ENCODE measurements at regions of chr7 and their contacts with region 1.

Region 1: GRCh38 chr7:100563809-100564400 is 9.8 kb downstream of the SAP25 start:
- DNase-seq: peak; percentile 92
- ATAC-seq: peak; percentile 76
- H3K4me3 Mint-ChIP-seq: no peak overlapping the region
- H3K27ac Mint-ChIP-seq: no peak overlapping the region
- H3K4me1 Mint-ChIP-seq: peaks cover 26% of the 10 kb centered on the region
- H3K27me3 Mint-ChIP-seq: no peaks in the 10 kb centered on the region
- CTCF ChIP-seq: peak; percentile 95

Region 2: GRCh38 chr7:100380196-100380595 is 183.7 kb before region 1 on chr7:
- CTCF ChIA-PET with region 1: no interaction called
- POLR2A ChIA-PET with region 1: no interaction called
- intact Hi-C with region 1: no loop called
- DNase-seq: no peak
- ATAC-seq: no peak
- H3K4me3 Mint-ChIP-seq: no peak overlapping the region
- H3K27ac Mint-ChIP-seq: no peak overlapping the region
- H3K4me1 Mint-ChIP-seq: peaks cover 9% of the 10 kb centered on the region
- H3K27me3 Mint-ChIP-seq: no peaks in the 10 kb centered on the region
- CTCF ChIP-seq: no peak

Region 3: DNA sequence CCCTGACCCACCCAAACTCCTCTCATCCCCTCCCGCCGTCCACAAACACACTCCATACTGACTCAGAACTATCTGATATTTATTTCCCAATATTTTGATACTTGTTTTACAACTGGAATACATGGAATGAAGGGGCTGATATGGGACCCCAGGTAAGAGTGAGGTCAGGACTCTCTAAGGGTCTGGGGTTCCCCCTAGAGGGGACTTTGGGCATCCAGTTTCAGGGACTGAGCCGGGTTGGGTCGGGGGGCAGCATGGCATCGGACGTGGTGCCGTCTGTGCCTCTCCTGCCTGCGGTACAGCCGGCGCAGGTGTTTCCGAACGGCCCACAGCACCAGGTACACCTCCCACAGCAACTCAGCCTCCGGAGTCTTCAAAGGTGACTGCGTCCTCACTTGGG is 107.3 kb before region 1 on chr7:
- CTCF ChIA-PET with region 1: interaction called, 13 read pairs
- POLR2A ChIA-PET with region 1: no interaction called
- intact Hi-C with region 1: no loop called
- DNase-seq: no peak
- ATAC-seq: no peak
- H3K4me3 Mint-ChIP-seq: no peak overlapping the region
- H3K27ac Mint-ChIP-seq: no peak overlapping the region
- H3K4me1 Mint-ChIP-seq: peaks cover 14% of the 10 kb centered on the region
- H3K27me3 Mint-ChIP-seq: no peaks in the 10 kb centered on the region
- CTCF ChIP-seq: no peak

Region 4: GRCh38 chr7:100478966-100479665 is 84.8 kb before region 1 on chr7 and contains the start of gene TSC22D4:
- CTCF ChIA-PET with region 1: interaction called, 36 read pairs
- POLR2A ChIA-PET with region 1: interaction called, 3 read pairs
- intact Hi-C with region 1: no loop called
- DNase-seq: peak; percentile 94
- ATAC-seq: peak; percentile 76
- H3K4me3 Mint-ChIP-seq: peak within 1 kb of the TSS; percentile 94
- H3K27ac Mint-ChIP-seq: peak within 1 kb of the TSS; percentile 95
- H3K4me1 Mint-ChIP-seq: peaks cover 40% of the 10 kb centered on the region
- H3K27me3 Mint-ChIP-seq: no peaks in the 10 kb centered on the region
- CTCF ChIP-seq: no peak
- total RNA-seq, gene TSC22D4: 92.6 to 94.2 TPM

Region 5: DNA sequence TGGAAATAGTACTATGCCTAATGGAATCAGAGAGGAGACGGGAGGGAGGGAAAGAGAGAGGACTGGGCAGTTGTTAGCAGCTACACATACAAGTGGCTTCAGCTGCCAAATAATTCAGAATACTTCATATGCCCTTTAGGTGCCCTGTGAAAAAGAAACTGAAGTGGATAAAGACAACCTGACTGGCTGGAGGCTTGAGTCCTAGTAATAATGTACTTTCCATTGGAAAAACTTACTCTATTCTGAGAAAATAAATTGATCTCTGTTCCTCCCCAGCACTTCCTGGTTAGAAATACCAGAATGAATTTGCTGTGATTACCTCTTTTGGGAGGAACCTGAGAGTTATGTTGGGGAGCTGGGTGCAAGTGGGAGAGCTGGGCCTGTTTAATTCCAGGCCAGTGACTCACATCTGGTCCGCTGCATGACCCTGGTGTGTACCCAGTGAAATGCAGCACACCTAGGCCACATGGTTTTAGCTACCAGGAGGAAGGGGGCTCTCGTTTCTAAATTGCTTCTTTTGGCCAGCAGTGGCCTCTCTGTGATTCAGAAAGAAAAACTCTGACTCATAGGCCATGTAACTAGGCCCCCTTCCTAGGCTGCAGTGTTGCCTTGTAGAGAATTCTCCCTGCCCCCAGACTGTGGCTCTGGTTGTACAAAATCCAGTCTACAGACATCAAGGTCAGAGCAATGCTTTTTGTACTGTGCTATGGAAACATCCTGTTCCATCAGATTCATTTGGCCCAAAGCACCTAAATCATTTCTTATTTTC is 18.4 kb before region 1 on chr7:
- CTCF ChIA-PET with region 1: interaction called, 92 read pairs
- POLR2A ChIA-PET with region 1: interaction called, 7 read pairs
- intact Hi-C with region 1: no loop called
- DNase-seq: peak; percentile 87
- ATAC-seq: peak; percentile 79
- H3K4me3 Mint-ChIP-seq: peak overlapping the region; percentile 91
- H3K27ac Mint-ChIP-seq: peak overlapping the region; percentile 99
- H3K4me1 Mint-ChIP-seq: peaks cover 90% of the 10 kb centered on the region
- H3K27me3 Mint-ChIP-seq: no peaks in the 10 kb centered on the region
- CTCF ChIP-seq: no peak

Region 6: GRCh38 chr7:100649826-100650547 is 86.1 kb after region 1 on chr7:
- CTCF ChIA-PET with region 1: no interaction called
- POLR2A ChIA-PET with region 1: no interaction called
- intact Hi-C with region 1: no loop called
- DNase-seq: no peak
- ATAC-seq: no peak
- H3K4me3 Mint-ChIP-seq: no peak overlapping the region
- H3K27ac Mint-ChIP-seq: no peak overlapping the region
- H3K4me1 Mint-ChIP-seq: peaks cover 4% of the 10 kb centered on the region
- H3K27me3 Mint-ChIP-seq: peaks cover 16% of the 10 kb centered on the region
- CTCF ChIP-seq: no peak

Region 7: GRCh38 chr7:100691676-100692577 is 128.0 kb after region 1 on chr7:
- CTCF ChIA-PET with region 1: interaction called, 10 read pairs
- POLR2A ChIA-PET with region 1: no interaction called
- intact Hi-C with region 1: no loop called
- DNase-seq: peak; percentile 88
- ATAC-seq: peak; percentile 77
- H3K4me3 Mint-ChIP-seq: peak overlapping the region; percentile 88
- H3K27ac Mint-ChIP-seq: peak overlapping the region; percentile 91
- H3K4me1 Mint-ChIP-seq: peaks cover 54% of the 10 kb centered on the region
- H3K27me3 Mint-ChIP-seq: no peaks in the 10 kb centered on the region
- CTCF ChIP-seq: peak; percentile 90

Region 8: GRCh38 chr7:100714725-100715124 is 150.8 kb after region 1 on chr7:
- CTCF ChIA-PET with region 1: no interaction called
- POLR2A ChIA-PET with region 1: no interaction called
- intact Hi-C with region 1: no loop called
- DNase-seq: no peak
- ATAC-seq: no peak
- H3K4me3 Mint-ChIP-seq: no peak overlapping the region
- H3K27ac Mint-ChIP-seq: no peak overlapping the region
- H3K4me1 Mint-ChIP-seq: no peaks in the 10 kb centered on the region
- H3K27me3 Mint-ChIP-seq: peaks cover 11% of the 10 kb centered on the region
- CTCF ChIP-seq: no peak

Region 9: DNA sequence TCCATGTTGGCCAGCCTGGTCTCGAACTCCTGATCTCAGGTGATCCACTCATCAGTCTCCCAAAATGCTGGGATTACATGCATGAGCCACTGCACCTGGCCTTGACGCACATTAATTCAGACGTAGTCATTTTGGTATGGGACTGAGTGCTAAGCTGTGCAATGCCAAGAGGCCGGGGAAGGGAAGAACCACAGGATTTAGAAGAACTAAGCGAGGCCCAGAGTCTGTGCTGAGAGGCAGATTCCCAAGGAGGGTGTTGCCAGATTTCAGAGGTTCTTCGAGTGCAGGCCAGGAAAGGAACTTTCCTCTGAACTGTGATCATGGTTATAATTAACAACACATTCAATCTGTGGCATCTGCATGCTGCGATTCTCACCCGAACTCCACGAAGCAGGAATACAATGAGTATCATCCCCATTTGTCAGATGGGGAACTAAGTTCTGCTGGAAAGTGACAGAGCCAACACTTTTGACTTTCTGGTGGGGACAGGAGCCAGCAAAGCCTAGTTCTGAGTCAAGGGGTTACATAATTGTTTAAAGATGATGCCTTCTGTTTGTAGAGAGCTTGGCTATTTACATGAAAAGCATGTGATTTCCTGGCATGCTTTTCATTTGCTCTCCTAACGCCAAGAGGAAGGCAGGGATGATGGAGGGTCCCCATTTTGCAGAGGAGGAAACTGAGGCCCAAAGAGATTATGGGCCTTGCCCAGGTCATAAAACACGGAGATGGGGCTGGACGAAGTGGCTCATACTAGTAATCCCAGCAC is 163.3 kb after region 1 on chr7:
- CTCF ChIA-PET with region 1: interaction called, 11 read pairs
- POLR2A ChIA-PET with region 1: no interaction called
- intact Hi-C with region 1: no loop called
- DNase-seq: no peak
- ATAC-seq: no peak
- H3K4me3 Mint-ChIP-seq: no peak overlapping the region
- H3K27ac Mint-ChIP-seq: no peak overlapping the region
- H3K4me1 Mint-ChIP-seq: peaks cover 2% of the 10 kb centered on the region
- H3K27me3 Mint-ChIP-seq: peaks cover 12% of the 10 kb centered on the region
- CTCF ChIP-seq: no peak